Caco-2 (cell line): ENCODE measurements at regions of chr17 and their contacts with region 1.

Region 1: GRCh38 chr17:10875979-10876555 is 38.2 kb upstream of the PIRT start:
- DNase-seq: peak; percentile 41 to 54
- H3K4me3 ChIP-seq: no peak overlapping the region
- H3K4me3 Mint-ChIP-seq: no peak overlapping the region
- H3K27ac Mint-ChIP-seq: no peak overlapping the region
- H3K4me1 ChIP-seq: no peaks in the 10 kb centered on the region
- H3K4me1 Mint-ChIP-seq: no peaks in the 10 kb centered on the region
- H3K27me3 ChIP-seq: no peaks in the 10 kb centered on the region
- H3K27me3 Mint-ChIP-seq: no peaks in the 10 kb centered on the region
- CTCF ChIP-seq: peak; percentile 49 to 56

Region 2: DNA sequence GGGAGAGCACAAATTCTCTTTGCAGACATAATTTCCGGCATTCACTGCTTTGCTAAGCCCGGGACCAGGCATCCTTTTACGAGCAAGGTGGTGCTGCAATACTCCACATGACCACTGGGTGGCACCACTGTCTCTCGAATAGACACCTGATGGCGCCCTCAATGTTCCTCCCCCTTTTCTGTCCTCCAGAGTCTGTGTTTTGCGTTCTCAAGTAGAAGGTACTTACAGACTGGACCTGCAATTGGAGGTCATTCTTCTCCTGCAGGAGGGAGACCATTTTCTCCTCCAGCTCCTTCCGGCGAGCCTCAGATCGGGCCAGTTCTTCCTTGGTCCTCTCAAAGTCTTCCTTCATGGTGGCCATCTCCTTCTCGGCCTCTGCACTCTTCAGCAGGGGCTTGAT is 548.4 kb before region 1 on chr17:
- CTCF ChIA-PET with region 1: no interaction called
- POLR2A ChIA-PET with region 1: no interaction called
- intact Hi-C with region 1: no loop called
- DNase-seq: peak; percentile 69 to 74
- H3K4me3 ChIP-seq: no peak overlapping the region
- H3K4me3 Mint-ChIP-seq: no peak overlapping the region
- H3K27ac Mint-ChIP-seq: no peak overlapping the region
- H3K4me1 ChIP-seq: no peaks in the 10 kb centered on the region
- H3K4me1 Mint-ChIP-seq: no peaks in the 10 kb centered on the region
- H3K27me3 ChIP-seq: no peaks in the 10 kb centered on the region
- H3K27me3 Mint-ChIP-seq: no peaks in the 10 kb centered on the region
- CTCF ChIP-seq: peak; percentile 69 to 71

Region 3: DNA sequence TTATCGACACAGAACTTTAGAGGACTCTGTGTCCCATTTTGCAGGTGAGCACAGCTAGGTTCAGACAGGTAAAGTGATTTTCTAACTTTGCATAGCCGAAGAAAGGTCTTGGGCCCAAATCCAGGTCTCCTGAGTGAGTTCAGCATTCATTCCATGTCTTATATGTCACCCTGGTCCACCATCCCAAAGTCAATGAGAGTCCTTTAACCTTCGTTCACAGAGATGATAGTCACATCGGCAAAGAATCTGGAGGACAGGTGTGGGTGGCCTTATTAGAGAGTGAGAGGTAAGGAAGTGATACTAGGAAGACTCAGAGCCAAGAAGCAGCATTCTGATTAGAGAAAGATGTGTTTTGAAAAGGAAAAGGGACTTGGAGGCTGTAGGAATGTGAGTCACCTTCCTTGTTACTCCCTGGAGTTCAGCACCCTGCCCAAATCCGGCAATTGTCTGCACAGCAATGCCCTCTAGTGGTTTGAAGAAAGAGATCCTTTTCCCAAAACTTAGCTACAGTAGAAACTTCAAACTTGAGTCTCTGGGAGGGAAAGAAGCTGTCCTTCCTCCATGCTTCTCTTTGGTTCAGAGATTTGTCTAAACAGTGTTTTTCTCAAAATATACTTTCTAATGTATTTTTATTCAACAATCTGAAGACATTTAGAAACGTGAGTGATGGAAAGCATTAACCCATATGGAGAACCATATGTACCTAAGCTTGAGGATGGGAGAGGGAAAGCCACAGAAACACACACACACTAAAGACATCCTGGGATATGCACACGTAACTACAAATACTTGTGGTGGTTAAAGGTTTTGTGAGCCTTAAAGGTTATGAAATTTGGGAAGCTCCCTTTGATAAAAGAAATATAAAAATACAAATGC is 268.5 kb after region 1 on chr17:
- CTCF ChIA-PET with region 1: interaction called, 41 read pairs
- POLR2A ChIA-PET with region 1: interaction called, 3 read pairs
- intact Hi-C with region 1: loop called (anchors 1 kb)
- DNase-seq: peak; percentile 42 to 43
- H3K4me3 ChIP-seq: no peak overlapping the region
- H3K4me3 Mint-ChIP-seq: no peak overlapping the region
- H3K27ac Mint-ChIP-seq: no peak overlapping the region
- H3K4me1 ChIP-seq: no peaks in the 10 kb centered on the region
- H3K4me1 Mint-ChIP-seq: no peaks in the 10 kb centered on the region
- H3K27me3 ChIP-seq: no peaks in the 10 kb centered on the region
- H3K27me3 Mint-ChIP-seq: no peaks in the 10 kb centered on the region
- CTCF ChIP-seq: peak in 1 of 2 experiments; percentile 55

Region 4: DNA sequence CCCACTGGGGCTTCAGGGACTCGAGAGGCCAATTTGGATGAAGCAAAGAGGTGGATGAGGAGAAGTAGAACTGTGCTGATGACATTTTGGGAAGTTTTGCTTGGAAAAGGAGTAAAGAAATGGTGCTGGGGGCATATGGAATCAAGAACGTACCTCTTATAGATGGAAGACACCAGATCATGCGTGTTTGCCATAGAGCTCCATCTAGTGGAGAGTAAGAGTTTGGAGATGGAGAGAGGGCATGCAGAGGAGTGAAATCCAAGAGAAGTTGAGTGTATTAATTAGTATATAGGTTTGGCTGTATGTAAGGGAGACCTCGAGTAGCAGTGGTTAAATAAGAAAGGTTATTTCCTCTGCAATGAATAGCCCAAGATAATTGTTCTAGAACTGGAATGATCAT is 420.9 kb after region 1 on chr17:
- CTCF ChIA-PET with region 1: interaction called, 3 read pairs
- POLR2A ChIA-PET with region 1: no interaction called
- intact Hi-C with region 1: loop called (anchors 10 kb)
- DNase-seq: no peak
- H3K4me3 ChIP-seq: no peak overlapping the region
- H3K4me3 Mint-ChIP-seq: no peak overlapping the region
- H3K27ac Mint-ChIP-seq: no peak overlapping the region
- H3K4me1 ChIP-seq: no peaks in the 10 kb centered on the region
- H3K4me1 Mint-ChIP-seq: no peaks in the 10 kb centered on the region
- H3K27me3 ChIP-seq: no peaks in the 10 kb centered on the region
- H3K27me3 Mint-ChIP-seq: no peaks in the 10 kb centered on the region
- CTCF ChIP-seq: peak in 1 of 2 experiments; percentile 37